ENCODE measurements at regions of chr10 and their contacts with region 1.

Region 1: GRCh38 chr10:124579011-124579399 is 117.4 kb downstream of the LHPP start:
- DNase-seq: no peak
- H3K4me3 ChIP-seq: no peak overlapping the region
- H3K27ac ChIP-seq: no peak overlapping the region
- H3K4me1 ChIP-seq: no peaks in the 10 kb centered on the region
- H3K27me3 ChIP-seq: no peaks in the 10 kb centered on the region
- CTCF ChIP-seq: no peak
- EP300 ChIP-seq: no peak
- POLR2A ChIP-seq: no peak

Region 2: DNA sequence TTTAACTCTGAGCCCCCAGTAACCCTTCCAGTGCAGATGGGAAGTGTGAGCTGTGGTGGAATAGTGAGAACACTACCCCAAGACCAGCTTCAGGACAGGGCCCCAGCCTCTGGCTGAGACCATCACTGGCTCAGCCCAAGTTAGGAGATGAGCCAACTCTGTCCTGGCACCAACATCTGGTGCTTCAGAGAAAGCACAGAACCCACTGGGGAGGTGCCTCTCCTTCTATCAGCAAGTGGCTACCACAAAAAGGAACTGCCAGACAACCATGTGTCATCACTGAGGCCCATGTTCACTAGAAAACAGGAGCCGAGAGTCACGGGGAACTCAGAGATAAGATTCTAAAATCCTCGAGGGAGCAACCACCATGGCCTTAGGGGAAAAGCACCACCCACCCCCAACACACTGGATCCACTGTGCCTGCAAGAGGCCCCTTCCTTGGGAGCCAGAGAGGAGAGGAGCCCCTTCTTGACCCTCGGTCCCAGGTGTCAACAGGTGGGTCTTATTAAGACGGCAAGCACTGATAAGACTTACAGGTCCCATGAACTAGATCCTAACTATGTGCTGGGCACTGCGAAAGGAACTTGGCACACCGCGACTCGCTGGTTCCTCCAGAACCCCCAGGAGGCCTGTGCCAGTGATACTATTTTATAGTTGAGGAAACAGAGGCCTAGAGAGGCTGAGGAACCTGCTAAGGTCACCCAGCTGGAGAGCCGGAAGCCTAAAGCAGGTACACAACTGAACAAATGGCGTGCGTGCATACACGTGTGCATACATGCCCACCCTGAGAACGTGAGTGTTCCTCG is 62.5 kb after region 1 on chr10:
- in situ Hi-C with region 1: no loop called
- intact Hi-C with region 1: loop called (anchors 2 kb)
- DNase-seq: peak; percentile 38
- H3K4me3 ChIP-seq: no peak overlapping the region
- H3K27ac ChIP-seq: peak overlapping the region; percentile 48 to 67 (median 62)
- H3K4me1 ChIP-seq: peaks cover 13 to 40% (median 29%) of the 10 kb centered on the region in 4 donors
- H3K27me3 ChIP-seq: no peaks in the 10 kb centered on the region
- CTCF ChIP-seq: no peak
- EP300 ChIP-seq: no peak
- POLR2A ChIP-seq: no peak

Measured in transverse colon (tissue), 4 donors.